Mammary epithelial cell (primary cell): ENCODE measurements at regions of chr3 and their contacts with region 1.

Region 1: GRCh38 chr3:57755668-57756527 is at the start of gene SLMAP:
- DNase-seq: peak; percentile 97
- H3K4me3 ChIP-seq: peak within 1 kb of the TSS; percentile 65 to 94 (median 77)
- H3K27ac ChIP-seq: peak within 1 kb of the TSS; percentile 97
- H3K4me1 ChIP-seq: peaks cover 41% of the 10 kb centered on the region
- H3K27me3 ChIP-seq: no peaks in the 10 kb centered on the region
- CTCF ChIP-seq: no peak
- total RNA-seq, gene SLMAP: 96.4 to 126 TPM

Region 2: DNA sequence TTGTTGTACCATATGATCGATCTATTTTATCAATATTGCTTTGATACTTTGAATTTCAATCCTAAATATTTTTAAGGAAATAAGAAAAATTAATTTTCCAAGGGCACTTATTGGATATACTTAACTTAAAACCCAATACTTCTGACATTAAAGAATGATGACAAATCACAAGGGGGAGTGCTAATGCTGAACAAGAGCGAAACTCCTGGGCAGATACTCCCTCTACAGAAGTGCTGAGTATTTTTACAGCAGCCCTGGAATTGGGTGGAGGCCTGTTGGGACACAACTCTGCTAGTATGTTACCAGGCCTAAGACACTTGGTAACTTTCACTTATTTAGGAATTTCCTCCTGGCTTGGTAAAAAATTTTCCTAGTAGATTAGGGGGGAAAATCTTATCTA is 109.2 kb before region 1 on chr3:
- CTCF ChIA-PET with region 1: no interaction called
- dilution Hi-C with region 1: no loop called
- in situ Hi-C with region 1: no loop called
- intact Hi-C with region 1: loop called (anchors 1 kb)
- DNase-seq: peak; percentile 78
- H3K4me3 ChIP-seq: no peak overlapping the region
- H3K27ac ChIP-seq: peak overlapping the region; percentile 29
- H3K4me1 ChIP-seq: peaks cover 3% of the 10 kb centered on the region
- H3K27me3 ChIP-seq: no peaks in the 10 kb centered on the region
- CTCF ChIP-seq: peak in 1 of 2 donors; percentile 44

Region 3: GRCh38 chr3:57692259-57693147 is 63.4 kb before region 1 on chr3 and contains the start of gene DENND6A:
- CTCF ChIA-PET with region 1: interaction called, 12 read pairs
- dilution Hi-C with region 1: loop called (anchors 10 kb)
- in situ Hi-C with region 1: loop called (anchors 5 to 10 kb)
- intact Hi-C with region 1: loop called (anchors 1 kb)
- DNase-seq: peak; percentile 92
- H3K4me3 ChIP-seq: peak within 1 kb of the TSS; percentile 64 to 88 (median 75)
- H3K27ac ChIP-seq: peak within 1 kb of the TSS; percentile 82
- H3K4me1 ChIP-seq: peaks cover 52% of the 10 kb centered on the region
- H3K27me3 ChIP-seq: no peaks in the 10 kb centered on the region
- CTCF ChIP-seq: no peak
- total RNA-seq, gene DENND6A: 26.3 to 29.2 TPM

Region 4: GRCh38 chr3:57729334-57730045 is 26.4 kb before region 1 on chr3:
- CTCF ChIA-PET with region 1: no interaction called
- dilution Hi-C with region 1: no loop called
- in situ Hi-C with region 1: no loop called
- intact Hi-C with region 1: no loop called
- DNase-seq: peak; percentile 62
- H3K4me3 ChIP-seq: no peak overlapping the region
- H3K27ac ChIP-seq: no peak overlapping the region
- H3K4me1 ChIP-seq: no peaks in the 10 kb centered on the region
- H3K27me3 ChIP-seq: no peaks in the 10 kb centered on the region
- CTCF ChIP-seq: no peak

Region 5: DNA sequence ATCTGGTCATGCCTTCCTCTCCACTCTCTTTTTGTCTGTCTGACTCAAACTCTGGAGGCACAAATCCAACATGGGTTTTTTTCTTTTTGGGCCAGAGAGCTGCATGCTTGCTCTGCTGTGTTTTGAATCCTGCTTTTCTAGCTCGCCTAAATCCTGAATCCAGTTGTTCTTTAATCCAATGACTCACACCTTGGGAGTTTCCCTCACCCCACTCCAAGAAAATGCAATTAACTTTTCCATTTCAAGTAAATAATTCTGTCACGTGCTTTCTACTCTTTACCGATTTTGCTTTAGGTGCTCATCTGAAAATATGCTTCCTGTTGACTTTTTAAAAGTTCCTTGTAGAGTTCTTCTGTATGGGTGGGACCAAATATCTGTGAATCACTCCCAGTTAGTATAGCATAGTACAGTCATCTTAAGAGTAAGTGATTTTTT is 47.8 kb after region 1 on chr3:
- CTCF ChIA-PET with region 1: no interaction called
- dilution Hi-C with region 1: no loop called
- in situ Hi-C with region 1: no loop called
- intact Hi-C with region 1: loop called (anchors 2 kb)
- DNase-seq: peak; percentile 97
- H3K4me3 ChIP-seq: peak overlapping the region in 2 of 3 experiments; percentile 3 to 12
- H3K27ac ChIP-seq: peak overlapping the region; percentile 94
- H3K4me1 ChIP-seq: peaks cover 40% of the 10 kb centered on the region
- H3K27me3 ChIP-seq: no peaks in the 10 kb centered on the region
- CTCF ChIP-seq: no peak

Region 6: DNA sequence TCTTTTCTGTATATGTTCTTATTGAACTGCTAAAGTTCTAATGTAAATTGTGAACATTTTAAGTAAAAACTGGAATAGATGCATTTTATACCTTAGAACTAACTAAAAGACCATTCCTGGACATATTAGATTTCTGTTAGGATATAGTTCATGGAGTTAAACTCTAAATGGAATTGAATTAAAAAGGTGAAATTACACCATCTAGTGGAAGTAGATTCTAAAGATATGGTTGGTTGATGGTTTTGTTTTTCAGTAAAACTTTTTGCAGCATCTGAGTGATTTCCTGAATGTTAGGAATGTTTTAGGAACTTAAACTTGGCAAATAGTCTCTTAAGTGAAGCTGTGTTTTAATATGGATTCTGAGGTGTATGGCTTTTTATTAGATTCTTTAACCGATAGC is 97.0 kb after region 1 on chr3:
- CTCF ChIA-PET with region 1: no interaction called
- dilution Hi-C with region 1: loop called (anchors 5 kb)
- in situ Hi-C with region 1: no loop called
- intact Hi-C with region 1: loop called (anchors 2 kb)
- DNase-seq: peak; percentile 12
- H3K4me3 ChIP-seq: no peak overlapping the region
- H3K27ac ChIP-seq: peak overlapping the region; percentile 62
- H3K4me1 ChIP-seq: peaks cover 6% of the 10 kb centered on the region
- H3K27me3 ChIP-seq: no peaks in the 10 kb centered on the region
- CTCF ChIP-seq: peak; percentile 13 to 39

Region 7: GRCh38 chr3:57998366-57999283 is 242.7 kb after region 1 on chr3:
- CTCF ChIA-PET with region 1: no interaction called
- dilution Hi-C with region 1: no loop called
- in situ Hi-C with region 1: no loop called
- intact Hi-C with region 1: no loop called
- DNase-seq: peak; percentile 76
- H3K4me3 ChIP-seq: no peak overlapping the region
- H3K27ac ChIP-seq: peak overlapping the region; percentile 96
- H3K4me1 ChIP-seq: peaks cover 41% of the 10 kb centered on the region
- H3K27me3 ChIP-seq: no peaks in the 10 kb centered on the region
- CTCF ChIP-seq: no peak